SK-N-SH (cell line): ENCODE measurements at regions of chr7 and their contacts with region 1.

Region 1: GRCh38 chr7:97845622-97846203 is 26.5 kb downstream of the ASNS start:
- DNase-seq: peak; percentile 52
- H3K4me3 ChIP-seq: no peak overlapping the region
- H3K27ac ChIP-seq: no peak overlapping the region
- H3K4me1 ChIP-seq: no peaks in the 10 kb centered on the region
- H3K27me3 ChIP-seq: peaks cover 13% of the 10 kb centered on the region
- CTCF ChIP-seq: peak; percentile 75
- EP300 ChIP-seq: no peak
- RAD21 ChIP-seq: peak; percentile 72

Region 2: GRCh38 chr7:97819161-97819560 is 26.6 kb before region 1 on chr7:
- CTCF ChIA-PET with region 1: interaction called, 22 read pairs
- POLR2A ChIA-PET with region 1: no interaction called
- DNase-seq: no peak
- H3K4me3 ChIP-seq: no peak overlapping the region
- H3K27ac ChIP-seq: no peak overlapping the region
- H3K4me1 ChIP-seq: no peaks in the 10 kb centered on the region
- H3K27me3 ChIP-seq: peaks cover 5% of the 10 kb centered on the region; the same call in 1 of the 2 replicates
- CTCF ChIP-seq: no peak; the same call in 1 of the 2 replicates
- EP300 ChIP-seq: no peak
- RAD21 ChIP-seq: no peak

Region 3: GRCh38 chr7:98014352-98014751 is 168.6 kb after region 1 on chr7:
- CTCF ChIA-PET with region 1: interaction called, 14 read pairs
- POLR2A ChIA-PET with region 1: no interaction called
- DNase-seq: no peak
- H3K4me3 ChIP-seq: no peak overlapping the region
- H3K27ac ChIP-seq: no peak overlapping the region
- H3K4me1 ChIP-seq: no peaks in the 10 kb centered on the region
- H3K27me3 ChIP-seq: peaks cover 11% of the 10 kb centered on the region; the same call in 1 of the 2 replicates
- CTCF ChIP-seq: no peak
- EP300 ChIP-seq: no peak
- RAD21 ChIP-seq: peak; percentile 26; the same call in 1 of the 2 replicates